A549 (cell line): ENCODE measurements at regions of chr11 and their contacts with region 1.

Region 1: GRCh38 chr11:4187055-4187988 is 92.7 kb downstream of the RRM1 start:
- DNase-seq: peak; percentile 80 to 84
- ATAC-seq: peak; percentile 87 to 94
- H3K4me3 ChIP-seq: peak overlapping the region; percentile 77
- H3K27ac ChIP-seq: peak overlapping the region; percentile 91 to 94
- H3K4me1 ChIP-seq: no peaks in the 10 kb centered on the region
- CTCF ChIP-seq: peak; percentile 94
- EP300 ChIP-seq: no peak
- POLR2A ChIP-seq: no peak
- RAD21 ChIP-seq: peak; percentile 92 to 99

Region 2: GRCh38 chr11:3834664-3835461 is 352.5 kb before region 1 on chr11:
- CTCF ChIA-PET with region 1: no interaction called
- POLR2A ChIA-PET with region 1: no interaction called
- DNase-seq: no peak
- ATAC-seq: no peak
- H3K4me3 ChIP-seq: no peak overlapping the region
- H3K27ac ChIP-seq: no peak overlapping the region
- H3K4me1 ChIP-seq: peaks cover 38% of the 10 kb centered on the region
- CTCF ChIP-seq: no peak
- EP300 ChIP-seq: no peak
- POLR2A ChIP-seq: no peak
- RAD21 ChIP-seq: no peak

Region 3: DNA sequence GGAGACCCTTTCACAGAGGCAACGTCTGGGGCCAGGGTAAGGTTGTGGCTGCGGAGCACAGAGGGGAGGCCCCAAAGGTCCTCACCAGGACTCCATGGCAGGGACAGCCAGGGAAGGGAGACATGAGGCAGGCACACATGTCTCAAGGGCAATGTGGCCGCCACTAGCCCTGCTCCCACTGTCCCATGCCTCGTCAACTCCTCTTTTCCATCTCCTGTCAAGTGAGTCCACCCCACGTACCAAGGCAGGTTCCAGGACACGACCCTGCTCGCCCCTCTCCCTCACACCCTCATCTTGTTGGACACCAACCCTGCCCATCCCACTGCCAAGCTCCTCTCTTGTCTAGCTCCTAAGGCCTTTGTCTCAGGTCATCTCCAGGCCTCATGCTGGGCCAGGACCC is 19.6 kb before region 1 on chr11:
- CTCF ChIA-PET with region 1: interaction called, 14 read pairs
- POLR2A ChIA-PET with region 1: no interaction called
- DNase-seq: no peak
- ATAC-seq: no peak
- H3K4me3 ChIP-seq: no peak overlapping the region
- H3K27ac ChIP-seq: no peak overlapping the region
- H3K4me1 ChIP-seq: no peaks in the 10 kb centered on the region
- CTCF ChIP-seq: no peak
- EP300 ChIP-seq: no peak
- POLR2A ChIP-seq: no peak
- RAD21 ChIP-seq: no peak

Region 4: DNA sequence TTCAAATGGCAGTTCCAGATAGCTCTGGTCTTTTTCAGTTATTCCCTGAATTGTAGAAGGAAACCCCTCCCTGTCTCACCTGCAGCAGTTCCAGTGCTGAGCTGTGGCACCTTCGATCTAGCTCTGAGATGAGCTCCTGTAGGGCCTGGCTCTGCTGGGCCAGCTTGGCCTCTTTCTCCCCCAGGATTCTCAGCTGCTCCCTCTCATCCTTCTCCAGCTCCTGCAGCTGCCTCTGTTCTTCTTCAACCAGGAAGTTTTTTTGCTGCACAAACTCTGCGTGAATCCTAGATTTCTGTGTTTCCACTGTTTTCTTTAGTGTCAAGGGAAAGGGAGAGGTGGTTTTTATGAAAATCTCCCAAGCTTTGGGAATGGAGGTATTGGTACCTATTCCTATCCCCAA is 200.9 kb after region 1 on chr11:
- CTCF ChIA-PET with region 1: interaction called, 10 read pairs
- POLR2A ChIA-PET with region 1: no interaction called
- DNase-seq: no peak
- ATAC-seq: no peak
- H3K4me3 ChIP-seq: no peak overlapping the region
- H3K27ac ChIP-seq: no peak overlapping the region
- H3K4me1 ChIP-seq: no peaks in the 10 kb centered on the region
- CTCF ChIP-seq: no peak
- EP300 ChIP-seq: no peak
- POLR2A ChIP-seq: no peak
- RAD21 ChIP-seq: no peak

Region 5: DNA sequence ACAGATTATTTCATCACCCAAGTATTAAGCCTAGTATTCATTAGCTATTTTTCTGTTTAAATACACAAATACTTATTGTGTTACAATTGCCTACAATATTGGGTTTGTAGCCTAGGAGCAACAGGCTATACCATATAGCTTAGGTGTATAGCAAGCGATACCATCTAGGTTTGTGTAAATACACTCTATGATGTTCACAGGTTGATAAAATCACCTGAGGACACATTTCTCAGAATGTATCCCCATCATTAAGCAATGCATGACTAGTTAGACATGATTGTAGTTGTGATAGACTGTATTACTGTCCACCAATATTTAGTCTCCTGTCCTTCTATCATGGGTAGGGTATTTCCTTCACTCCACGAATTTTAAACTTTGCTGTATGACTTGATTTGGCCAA is 303.5 kb after region 1 on chr11:
- CTCF ChIA-PET with region 1: interaction called, 96 read pairs
- POLR2A ChIA-PET with region 1: no interaction called
- DNase-seq: no peak
- ATAC-seq: no peak
- H3K4me3 ChIP-seq: no peak overlapping the region
- H3K27ac ChIP-seq: no peak overlapping the region
- H3K4me1 ChIP-seq: no peaks in the 10 kb centered on the region
- CTCF ChIP-seq: no peak
- EP300 ChIP-seq: no peak
- POLR2A ChIP-seq: no peak
- RAD21 ChIP-seq: no peak

Region 6: GRCh38 chr11:4523666-4524065 is 336.3 kb after region 1 on chr11:
- CTCF ChIA-PET with region 1: interaction called, 21 read pairs
- POLR2A ChIA-PET with region 1: no interaction called
- DNase-seq: no peak
- ATAC-seq: no peak
- H3K4me3 ChIP-seq: no peak overlapping the region
- H3K27ac ChIP-seq: no peak overlapping the region
- H3K4me1 ChIP-seq: no peaks in the 10 kb centered on the region
- CTCF ChIP-seq: no peak
- EP300 ChIP-seq: no peak
- POLR2A ChIP-seq: no peak
- RAD21 ChIP-seq: no peak

Region 7: DNA sequence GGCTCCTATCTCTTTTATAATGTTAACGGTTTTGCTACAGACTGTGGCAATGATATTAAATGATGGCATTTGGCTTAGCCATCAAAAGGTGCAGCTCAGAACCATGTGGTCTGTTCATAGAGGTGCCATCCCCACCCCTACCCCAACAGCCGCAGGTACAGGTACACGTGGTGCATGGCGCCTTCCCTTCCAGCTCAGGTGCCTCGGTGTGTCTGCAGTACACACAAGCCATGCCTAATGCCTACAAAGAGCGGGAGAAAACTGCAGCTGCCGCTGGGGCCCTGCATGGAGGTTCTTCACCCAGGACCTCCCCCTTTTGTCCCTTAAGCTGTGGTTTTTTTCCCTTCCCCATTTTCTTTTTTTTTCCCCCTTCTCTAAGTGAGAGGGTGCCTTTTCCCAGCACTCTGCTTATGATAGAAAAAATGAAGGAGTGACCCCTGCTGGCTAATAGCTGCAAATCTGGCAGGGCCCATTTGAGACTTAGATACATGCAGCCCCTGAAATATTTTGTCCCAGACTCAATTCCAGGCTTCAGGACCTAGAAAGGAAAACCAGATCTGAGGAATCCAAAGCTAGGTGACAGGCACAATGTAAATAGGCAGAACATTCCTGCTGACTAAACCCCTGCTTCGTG is 364.1 kb after region 1 on chr11:
- CTCF ChIA-PET with region 1: interaction called, 31 read pairs
- POLR2A ChIA-PET with region 1: no interaction called
- DNase-seq: peak in 1 of 2 experiments; percentile 19
- ATAC-seq: peak; percentile 73 to 87; a peak in 5 of 6 replicates
- H3K4me3 ChIP-seq: no peak overlapping the region
- H3K27ac ChIP-seq: no peak overlapping the region
- H3K4me1 ChIP-seq: peaks cover 13% of the 10 kb centered on the region; the same call in 2 of the 3 replicates
- CTCF ChIP-seq: peak; percentile 32; the same call in 1 of the 3 replicates
- EP300 ChIP-seq: no peak
- POLR2A ChIP-seq: no peak
- RAD21 ChIP-seq: peak in 1 of 2 experiments; percentile 34; a peak in 2 of 5 replicates